ENCODE measurements at regions of chr13 and their contacts with region 1.

Region 1: GRCh38 chr13:76886292-76887075 is at the start of gene KCTD12:
- DNase-seq: peak; percentile 91 to 96 (median 93)
- ATAC-seq: peak; percentile 64 to 91 (median 86)
- H3K4me3 ChIP-seq: peak within 1 kb of the TSS; percentile 62 to 96 (median 76)
- H3K27ac ChIP-seq: peak within 1 kb of the TSS; percentile 81 to 97 (median 92)
- H3K4me1 ChIP-seq: peaks cover 0 to 33% (median 12%) of the 10 kb centered on the region in 12 donors
- H3K27me3 ChIP-seq: no peaks in the 10 kb centered on the region
- CTCF ChIP-seq: peak in 10 of 12 donors; percentile 22 to 61 (median 47)
- POLR2A ChIP-seq: peak in 1 of 2 donors; percentile 89
- total RNA-seq, gene KCTD12: 29.5 to 84.4 (median 44.1) TPM

Region 2: GRCh38 chr13:76293346-76293745 is 593.1 kb before region 1 on chr13:
- intact Hi-C with region 1: no loop called
- DNase-seq: no peak
- ATAC-seq: peak in 1 of 4 donors; percentile 68
- H3K4me3 ChIP-seq: no peak overlapping the region
- H3K27ac ChIP-seq: peak overlapping the region in 5 of 12 donors; percentile 0 to 47 (median 14)
- H3K4me1 ChIP-seq: peaks cover 0 to 14% (median 4%) of the 10 kb centered on the region in 12 donors
- H3K27me3 ChIP-seq: no peaks in the 10 kb centered on the region
- CTCF ChIP-seq: no peak
- POLR2A ChIP-seq: no peak

Region 3: GRCh38 chr13:76667551-76667950 is 218.9 kb before region 1 on chr13:
- intact Hi-C with region 1: loop called in 8 of 10 experiments (anchors 5 kb)
- DNase-seq: peak in 2 of 5 donors; percentile 24 to 26
- ATAC-seq: peak in 3 of 4 donors; percentile 57 to 71 (median 63)
- H3K4me3 ChIP-seq: no peak overlapping the region
- H3K27ac ChIP-seq: no peak overlapping the region
- H3K4me1 ChIP-seq: peaks cover 0 to 31% (median 0%) of the 10 kb centered on the region in 12 donors
- H3K27me3 ChIP-seq: no peaks in the 10 kb centered on the region
- CTCF ChIP-seq: peak in 11 of 12 donors; percentile 8 to 60 (median 38)
- POLR2A ChIP-seq: no peak

Region 4: GRCh38 chr13:76764429-76764828 is 122.1 kb before region 1 on chr13:
- intact Hi-C with region 1: loop called in 3 of 10 experiments (anchors 1 to 10 kb)
- DNase-seq: peak; percentile 63 to 87 (median 83)
- ATAC-seq: peak; percentile 95 to 99 (median 98)
- H3K4me3 ChIP-seq: peak overlapping the region in 8 of 12 donors; percentile 14 to 31 (median 26)
- H3K27ac ChIP-seq: peak overlapping the region; percentile 56 to 86 (median 75)
- H3K4me1 ChIP-seq: peaks cover 0 to 34% (median 16%) of the 10 kb centered on the region in 12 donors
- H3K27me3 ChIP-seq: no peaks in the 10 kb centered on the region
- CTCF ChIP-seq: no peak
- POLR2A ChIP-seq: no peak

Region 5: DNA sequence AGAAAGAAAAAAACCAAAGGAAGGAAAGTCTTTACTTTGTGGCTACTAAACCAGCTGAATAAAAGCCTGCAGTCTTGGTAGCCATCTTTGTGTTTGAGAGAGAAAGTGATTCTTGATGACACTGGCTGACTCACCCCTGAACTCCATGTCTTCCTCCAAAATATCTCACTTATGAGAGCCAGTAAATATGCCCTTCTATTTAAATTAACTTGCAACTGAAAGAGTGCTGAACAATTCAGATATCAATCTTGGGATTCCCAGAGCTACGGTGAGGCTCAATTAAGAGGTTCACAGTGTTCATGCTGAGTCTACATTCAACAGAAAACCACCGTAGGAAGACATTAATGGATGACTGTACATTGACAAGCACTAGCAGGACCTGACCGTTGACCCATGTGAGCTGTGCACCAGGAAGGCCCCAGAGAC is 58.2 kb before region 1 on chr13:
- intact Hi-C with region 1: loop called (anchors 2 to 5 kb)
- DNase-seq: no peak
- ATAC-seq: no peak
- H3K4me3 ChIP-seq: no peak overlapping the region
- H3K27ac ChIP-seq: peak overlapping the region in 1 of 12 donors; percentile 72
- H3K4me1 ChIP-seq: peaks cover 0 to 30% (median 14%) of the 10 kb centered on the region in 12 donors
- H3K27me3 ChIP-seq: no peaks in the 10 kb centered on the region
- CTCF ChIP-seq: no peak
- POLR2A ChIP-seq: no peak

Region 6: DNA sequence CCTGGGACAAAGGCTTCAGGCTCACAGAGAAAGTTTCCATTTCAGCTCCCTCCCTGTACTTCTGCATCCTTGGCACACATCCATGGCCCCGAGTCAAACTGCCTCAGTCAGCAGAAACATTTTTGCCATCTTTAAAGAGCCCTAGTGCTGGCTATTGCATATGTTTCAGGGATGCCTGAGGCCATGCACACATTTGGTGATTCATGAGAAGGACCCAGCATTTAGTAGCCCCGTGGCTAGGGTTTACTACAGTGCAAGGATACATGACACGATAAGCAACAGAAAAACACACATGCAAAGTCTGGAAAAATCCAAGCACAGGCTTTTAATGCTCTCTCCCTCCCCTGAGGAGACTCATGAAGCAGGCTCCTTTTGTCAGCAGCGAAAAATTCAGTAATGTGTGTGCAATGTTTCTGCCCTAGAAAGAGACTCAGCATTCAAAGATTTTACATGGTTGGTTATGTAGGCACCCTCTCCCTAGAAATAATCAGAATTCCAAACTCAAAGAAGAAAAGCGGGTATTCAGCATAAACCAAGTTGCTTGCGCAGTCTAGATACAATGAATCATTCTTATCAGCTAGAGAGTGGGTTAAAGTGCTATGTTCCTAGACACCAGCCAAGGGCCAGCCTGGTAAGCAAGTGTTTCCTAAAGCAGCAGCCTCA is 79.4 kb after region 1 on chr13:
- intact Hi-C with region 1: no loop called
- DNase-seq: peak in 4 of 5 donors; percentile 47 to 58 (median 58)
- ATAC-seq: peak; percentile 15 to 55 (median 52)
- H3K4me3 ChIP-seq: no peak overlapping the region
- H3K27ac ChIP-seq: no peak overlapping the region
- H3K4me1 ChIP-seq: peaks cover 0 to 8% (median 0%) of the 10 kb centered on the region in 12 donors
- H3K27me3 ChIP-seq: peaks cover 0 to 4% (median 0%) of the 10 kb centered on the region in 9 donors
- CTCF ChIP-seq: no peak
- POLR2A ChIP-seq: no peak

Region 7: DNA sequence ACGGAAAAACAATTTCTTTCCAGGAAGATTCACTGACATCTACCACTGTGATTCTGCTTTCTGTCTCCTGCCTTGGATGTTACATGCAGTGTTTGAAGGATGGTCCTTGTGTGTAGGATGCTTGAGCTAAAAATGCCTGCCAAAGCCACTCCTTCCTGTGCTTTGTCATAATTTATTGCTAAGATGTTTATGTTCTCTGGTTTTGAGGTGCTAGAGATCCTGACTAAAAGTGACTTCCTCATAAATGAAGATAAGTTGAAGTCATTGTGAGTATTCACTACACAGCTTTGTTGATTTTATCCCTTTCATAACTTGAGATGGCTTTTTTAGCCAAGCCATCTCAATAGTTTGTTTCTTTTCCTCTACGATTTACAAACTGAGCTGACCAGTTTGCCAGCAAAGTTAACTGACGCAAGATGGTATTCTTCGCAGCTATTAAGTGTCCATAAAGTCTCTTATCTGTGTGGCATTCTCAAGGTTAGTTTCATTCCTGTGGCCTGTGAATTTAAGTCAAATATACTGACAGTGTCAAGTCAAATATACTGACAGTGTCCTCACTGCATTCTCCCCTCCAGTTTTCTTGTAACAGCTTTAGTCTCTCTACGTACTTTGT is 156.2 kb after region 1 on chr13:
- intact Hi-C with region 1: no loop called
- DNase-seq: no peak
- ATAC-seq: no peak
- H3K4me3 ChIP-seq: no peak overlapping the region
- H3K27ac ChIP-seq: peak overlapping the region in 1 of 12 donors; percentile 35
- H3K4me1 ChIP-seq: no peaks in the 10 kb centered on the region
- H3K27me3 ChIP-seq: no peaks in the 10 kb centered on the region
- CTCF ChIP-seq: no peak
- POLR2A ChIP-seq: no peak